GM23248 (cell line): ENCODE measurements at regions of chr7 and their contacts with region 1.

Region 1: GRCh38 chr7:992709-993607 is 10.0 kb downstream of the CYP2W1 start:
- DNase-seq: peak; percentile 96
- H3K4me3 ChIP-seq: no peak overlapping the region
- H3K27ac ChIP-seq: no peak overlapping the region
- H3K4me1 ChIP-seq: 0 out of 2 replicates have a peak, but pooled peaks cover 3% of the 10 kb centered on the region
- H3K27me3 ChIP-seq: no peaks in the 10 kb centered on the region

Region 2: GRCh38 chr7:1059200-1060091 is 66.5 kb after region 1 on chr7:
- in situ Hi-C with region 1: loop called (anchors 5 kb)
- DNase-seq: peak; percentile 12
- H3K4me3 ChIP-seq: no peak overlapping the region
- H3K27ac ChIP-seq: no peak overlapping the region
- H3K4me1 ChIP-seq: no peaks in the 10 kb centered on the region
- H3K27me3 ChIP-seq: no peaks in the 10 kb centered on the region

Region 3: GRCh38 chr7:1331561-1332488 is 338.9 kb after region 1 on chr7:
- in situ Hi-C with region 1: no loop called
- DNase-seq: no peak
- H3K4me3 ChIP-seq: no peak overlapping the region
- H3K27ac ChIP-seq: no peak overlapping the region
- H3K4me1 ChIP-seq: no peaks in the 10 kb centered on the region
- H3K27me3 ChIP-seq: peaks cover 9% of the 10 kb centered on the region; the same call in 1 of the 2 replicates